Prostate gland (tissue), 2 donors: ENCODE measurements at regions of chr5 and their contacts with region 1.

Region 1: DNA sequence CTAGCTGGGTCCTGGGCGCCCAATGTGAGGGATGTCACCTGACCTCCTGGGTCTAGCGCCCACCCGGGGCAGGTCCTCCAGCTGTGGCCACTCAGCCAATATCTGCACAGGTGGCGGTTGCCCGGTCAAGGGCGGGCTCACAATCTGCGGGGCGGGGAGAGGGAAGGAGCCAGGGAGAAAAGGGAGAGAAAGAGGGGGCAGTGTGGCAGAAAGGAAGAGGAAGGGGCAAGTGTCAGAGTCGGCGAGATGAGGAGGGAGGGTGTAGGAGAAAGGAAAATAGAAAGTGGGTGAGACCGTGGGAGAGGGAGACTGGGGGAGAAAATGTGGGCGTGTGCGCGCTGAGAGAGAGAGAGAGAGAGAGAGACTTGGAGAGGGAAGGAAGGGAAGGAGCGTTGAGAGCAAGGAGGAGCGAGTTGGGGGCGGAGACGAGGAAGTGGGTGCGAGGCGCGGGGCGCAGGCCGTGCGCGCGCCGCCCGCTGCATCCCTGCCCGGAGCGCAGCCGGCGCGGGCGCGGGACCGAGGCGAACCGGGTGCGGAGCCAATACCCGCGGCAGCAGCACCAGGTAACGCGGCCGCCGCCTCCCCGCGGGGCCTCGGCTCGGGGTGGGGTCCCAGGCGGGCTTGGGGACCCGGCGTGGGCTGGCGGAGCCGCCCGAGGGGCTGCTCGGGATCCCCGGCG is at the start of gene HRH2:
- DNase-seq: no peak
- H3K4me3 ChIP-seq: peak within 1 kb of the TSS; percentile 40 to 46
- H3K27ac ChIP-seq: peak within 1 kb of the TSS in 1 of 2 donors; percentile 62
- H3K4me1 ChIP-seq: no peaks in the 10 kb centered on the region
- H3K27me3 ChIP-seq: no peaks in the 10 kb centered on the region
- CTCF ChIP-seq: no peak
- POLR2A ChIP-seq: no peak
- total RNA-seq, gene HRH2: 0.55 to 5.3 TPM

Region 2: DNA sequence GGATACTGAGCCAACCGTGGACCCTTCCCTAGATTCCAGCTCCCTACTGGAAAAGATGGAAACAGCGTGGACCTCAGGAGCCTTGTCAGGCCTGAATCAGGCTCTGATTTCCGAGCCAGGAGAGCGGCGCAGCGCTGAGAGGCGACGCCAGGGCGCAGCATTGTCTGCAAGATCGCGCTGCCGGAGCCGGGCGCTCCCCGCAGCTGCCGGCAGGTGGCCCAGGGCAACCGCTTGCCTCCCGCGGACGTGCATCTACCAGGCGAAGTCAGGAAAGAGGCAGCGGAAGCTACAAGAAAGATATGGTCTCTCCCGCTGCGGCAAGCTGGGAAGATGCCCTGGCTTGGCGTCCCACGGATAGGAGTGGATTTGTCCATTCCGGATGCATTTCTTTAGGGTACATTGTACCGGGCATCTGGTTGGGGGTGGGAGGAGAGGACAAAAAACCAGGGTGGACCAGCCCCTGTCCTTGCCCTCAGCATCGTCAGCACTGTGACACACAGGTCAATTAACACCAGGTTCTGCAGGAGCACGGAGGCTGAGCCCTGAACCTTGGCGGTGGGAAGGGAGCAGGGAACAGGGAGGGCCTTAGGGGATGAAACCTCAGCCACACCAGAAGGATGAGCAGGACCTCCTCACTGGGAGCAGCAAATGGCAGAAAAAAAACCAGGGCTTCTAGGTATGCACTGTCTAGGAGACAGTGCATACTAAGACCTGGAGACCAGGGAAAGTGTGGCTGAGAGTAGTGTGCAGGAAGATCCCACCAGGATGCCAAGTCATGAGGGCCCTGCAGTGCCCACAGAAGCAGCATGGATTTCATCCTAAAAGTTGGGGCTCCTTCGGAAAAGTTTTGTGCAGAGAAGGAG is 123.4 kb before region 1 on chr5:
- intact Hi-C with region 1: loop called (anchors 5 kb)
- DNase-seq: peak; percentile 56
- H3K4me3 ChIP-seq: no peak overlapping the region
- H3K27ac ChIP-seq: no peak overlapping the region
- H3K4me1 ChIP-seq: no peaks in the 10 kb centered on the region
- H3K27me3 ChIP-seq: no peaks in the 10 kb centered on the region
- CTCF ChIP-seq: peak; percentile 38 to 98 (median 92)
- POLR2A ChIP-seq: no peak

Region 3: DNA sequence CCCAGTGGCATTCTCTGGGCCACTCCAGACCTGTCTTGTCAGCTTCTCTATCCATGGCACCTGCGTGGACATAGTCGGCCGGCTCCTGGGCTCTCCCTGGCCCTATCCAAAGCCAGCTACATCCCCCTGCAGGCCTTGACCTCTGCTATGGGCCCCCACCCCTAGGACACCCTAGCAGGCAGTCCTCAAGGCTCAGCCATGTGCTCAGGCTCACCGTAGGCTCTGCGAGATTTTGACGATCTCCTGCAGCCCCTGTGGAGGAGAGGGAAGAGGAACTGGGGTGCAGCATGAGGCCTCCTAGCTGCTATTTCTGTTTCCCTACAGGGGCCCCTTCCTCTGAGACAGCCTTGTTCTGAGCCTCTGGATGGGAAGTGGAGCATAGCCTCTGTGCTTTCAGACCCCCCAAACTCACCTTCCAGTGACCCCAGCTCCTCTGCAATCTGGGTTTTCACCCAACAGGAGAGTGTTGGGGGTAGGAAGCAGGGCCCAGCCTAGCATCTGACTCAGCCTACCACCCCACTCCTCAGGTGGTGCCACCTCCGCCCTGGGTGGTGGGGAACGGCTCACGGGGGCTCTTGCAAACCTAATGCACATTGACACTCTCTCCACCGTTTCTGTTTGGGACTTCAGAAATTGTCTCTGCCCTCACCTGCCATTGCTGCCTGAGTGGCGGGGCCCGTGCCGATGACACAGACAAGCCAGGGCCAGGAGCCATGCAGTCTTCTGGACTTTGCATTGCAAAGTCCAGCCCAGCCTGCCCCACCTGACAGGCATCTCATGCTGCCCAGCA is 36.8 kb after region 1 on chr5:
- intact Hi-C with region 1: loop called (anchors 5 kb)
- DNase-seq: no peak
- H3K4me3 ChIP-seq: no peak overlapping the region
- H3K27ac ChIP-seq: peak overlapping the region in 1 of 2 donors; percentile 17
- H3K4me1 ChIP-seq: no peaks in the 10 kb centered on the region
- H3K27me3 ChIP-seq: no peaks in the 10 kb centered on the region
- CTCF ChIP-seq: no peak
- POLR2A ChIP-seq: no peak